Esophagus muscularis mucosa (tissue), 4 donors: ENCODE measurements at regions of chr2 and their contacts with region 1.

Region 1: DNA sequence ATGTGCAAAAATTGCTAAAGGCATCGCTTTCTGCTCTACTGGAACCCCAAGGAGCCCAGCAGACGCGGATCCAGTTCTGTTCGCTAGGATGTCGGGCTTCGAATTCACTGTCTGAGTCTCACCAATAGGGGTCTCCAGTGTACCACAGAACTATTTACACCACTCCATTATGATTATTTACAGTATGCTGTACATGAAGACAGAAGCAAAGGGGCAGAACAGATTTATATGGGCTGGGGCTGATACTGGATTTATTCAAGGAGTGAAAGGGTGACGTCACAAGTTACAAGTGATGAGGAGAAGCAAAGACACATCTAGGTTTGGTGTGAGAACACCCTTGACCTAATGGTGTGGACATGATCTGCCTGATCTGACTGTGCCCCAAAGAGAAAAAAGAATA is 185.3 kb upstream of the ATP5MC3 start:
- DNase-seq: peak; percentile 78
- H3K4me3 ChIP-seq: no peak overlapping the region
- H3K27ac ChIP-seq: no peak overlapping the region
- H3K4me1 ChIP-seq: no peaks in the 10 kb centered on the region
- H3K27me3 ChIP-seq: peaks cover 0 to 37% (median 0%) of the 10 kb centered on the region in 4 donors
- CTCF ChIP-seq: peak; percentile 10 to 56 (median 34)
- EP300 ChIP-seq: no peak
- POLR2A ChIP-seq: no peak

Region 2: DNA sequence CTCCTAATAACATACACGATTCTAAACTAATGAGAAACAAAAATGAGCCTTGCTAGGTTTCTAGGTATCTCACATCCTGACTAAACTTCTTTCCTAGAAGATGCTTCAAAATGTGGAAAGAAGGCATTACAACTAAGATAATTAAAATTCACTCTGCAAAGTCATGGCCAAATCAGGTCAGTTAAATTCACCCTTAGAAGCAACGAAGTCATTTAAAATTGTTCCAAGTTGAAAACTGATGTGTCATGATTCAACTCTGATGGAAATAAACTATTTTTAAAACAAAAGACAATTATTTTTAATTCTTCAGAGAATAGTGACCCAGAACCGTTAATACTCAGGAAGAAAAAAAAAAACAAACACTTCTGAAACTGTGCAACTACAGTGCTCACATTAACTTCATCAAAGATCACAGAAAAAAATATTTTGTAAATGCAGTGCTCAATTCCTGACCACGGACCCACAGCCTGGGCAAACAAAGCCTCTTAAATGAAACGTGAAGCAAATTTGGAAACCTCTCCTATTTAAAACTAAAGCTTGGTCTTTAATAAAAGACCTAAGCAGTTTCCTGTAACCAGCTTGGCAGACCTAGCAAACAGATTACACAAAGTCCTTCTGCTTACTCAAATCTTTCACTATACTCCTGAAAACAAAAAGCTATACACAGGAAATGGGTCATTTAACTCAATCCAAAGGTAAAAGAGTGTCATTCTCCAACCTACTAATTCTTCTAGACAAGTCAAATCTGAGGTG is 400.6 kb before region 1 on chr2:
- intact Hi-C with region 1: no loop called
- DNase-seq: no peak
- H3K4me3 ChIP-seq: no peak overlapping the region
- H3K27ac ChIP-seq: peak overlapping the region; percentile 27 to 66 (median 35)
- H3K4me1 ChIP-seq: peaks cover 10 to 39% (median 35%) of the 10 kb centered on the region in 4 donors
- H3K27me3 ChIP-seq: no peaks in the 10 kb centered on the region
- CTCF ChIP-seq: no peak
- EP300 ChIP-seq: no peak
- POLR2A ChIP-seq: no peak

Region 3: GRCh38 chr2:175709248-175709647 is 342.4 kb after region 1 on chr2:
- intact Hi-C with region 1: no loop called
- DNase-seq: no peak
- H3K4me3 ChIP-seq: no peak overlapping the region
- H3K27ac ChIP-seq: no peak overlapping the region
- H3K4me1 ChIP-seq: no peaks in the 10 kb centered on the region
- H3K27me3 ChIP-seq: peaks cover 0 to 25% (median 0%) of the 10 kb centered on the region in 4 donors
- CTCF ChIP-seq: no peak
- EP300 ChIP-seq: no peak
- POLR2A ChIP-seq: no peak

Region 4: GRCh38 chr2:176079831-176080539 is 713.2 kb after region 1 on chr2:
- intact Hi-C with region 1: loop called (anchors 5 kb)
- DNase-seq: no peak
- H3K4me3 ChIP-seq: peak overlapping the region; percentile 26 to 48 (median 38)
- H3K27ac ChIP-seq: no peak overlapping the region
- H3K4me1 ChIP-seq: peaks cover 18 to 49% (median 45%) of the 10 kb centered on the region in 4 donors
- H3K27me3 ChIP-seq: peaks cover 0 to 100% (median 89%) of the 10 kb centered on the region in 4 donors
- CTCF ChIP-seq: peak in 1 of 3 experiments; percentile 54
- EP300 ChIP-seq: no peak
- POLR2A ChIP-seq: no peak